BJ (cell line): ENCODE measurements at regions of chr20 and their contacts with region 1.

Region 1: GRCh38 chr20:40945754-40946450 is 82.7 kb upstream of the TOP1 start:
- DNase-seq: no peak
- H3K4me3 ChIP-seq: no peak overlapping the region
- H3K27me3 ChIP-seq: no peaks in the 10 kb centered on the region
- CTCF ChIP-seq: peak; percentile 78

Region 2: DNA sequence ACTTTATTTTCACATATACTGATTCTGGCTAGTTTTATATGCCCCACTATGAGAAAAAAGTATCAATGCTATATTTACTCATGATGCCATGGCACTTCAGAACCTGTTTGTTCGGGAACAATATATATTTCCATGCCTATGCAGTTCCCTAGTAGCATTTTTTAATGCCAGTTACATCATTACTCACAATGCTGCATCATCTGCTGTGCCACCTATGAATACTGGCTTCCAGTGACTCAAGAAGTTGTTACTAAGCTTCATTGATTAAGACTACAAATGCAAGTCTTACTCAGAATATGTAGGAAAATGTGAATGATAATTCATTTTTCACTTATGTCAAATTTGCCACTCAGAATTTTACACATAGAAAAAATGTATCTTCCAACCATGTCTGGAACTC is 354.8 kb before region 1 on chr20:
- CTCF ChIA-PET with region 1: no interaction called
- POLR2A ChIA-PET with region 1: no interaction called
- DNase-seq: no peak
- H3K4me3 ChIP-seq: no peak overlapping the region
- H3K27me3 ChIP-seq: no peaks in the 10 kb centered on the region
- CTCF ChIP-seq: no peak

Region 3: GRCh38 chr20:40741507-40742106 is 204.3 kb before region 1 on chr20:
- CTCF ChIA-PET with region 1: interaction called, 37 read pairs
- POLR2A ChIA-PET with region 1: no interaction called
- DNase-seq: no peak
- H3K4me3 ChIP-seq: no peak overlapping the region
- H3K27me3 ChIP-seq: peaks cover 3% of the 10 kb centered on the region
- CTCF ChIP-seq: peak; percentile 73

Region 4: GRCh38 chr20:40797425-40797824 is 148.5 kb before region 1 on chr20:
- CTCF ChIA-PET with region 1: interaction called, 24 read pairs
- POLR2A ChIA-PET with region 1: no interaction called
- DNase-seq: no peak
- H3K4me3 ChIP-seq: no peak overlapping the region
- H3K27me3 ChIP-seq: peaks cover 1% of the 10 kb centered on the region; the same call in 1 of the 2 replicates
- CTCF ChIP-seq: peak; percentile 71

Region 5: GRCh38 chr20:40956542-40957264 is 10.8 kb after region 1 on chr20:
- CTCF ChIA-PET with region 1: interaction called, 29 read pairs
- POLR2A ChIA-PET with region 1: no interaction called
- DNase-seq: no peak
- H3K4me3 ChIP-seq: no peak overlapping the region
- H3K27me3 ChIP-seq: no peaks in the 10 kb centered on the region
- CTCF ChIP-seq: no peak

Region 6: GRCh38 chr20:40962730-40963504 is 17.0 kb after region 1 on chr20:
- CTCF ChIA-PET with region 1: interaction called, 29 read pairs
- POLR2A ChIA-PET with region 1: no interaction called
- DNase-seq: no peak
- H3K4me3 ChIP-seq: no peak overlapping the region
- H3K27me3 ChIP-seq: no peaks in the 10 kb centered on the region; the same call in 1 of the 2 replicates
- CTCF ChIP-seq: peak; percentile 84